ENCODE measurements at regions of chr10 and their contacts with region 1.

Region 1: GRCh38 chr10:110076559-110077318 is 69.0 kb downstream of the ADD3 start:
- DNase-seq: peak in 1 of 2 donors; percentile 44
- ATAC-seq: peak; percentile 69 to 91 (median 83)
- H3K4me3 ChIP-seq: peak overlapping the region in 7 of 10 donors; percentile 16 to 37 (median 29)
- H3K27ac ChIP-seq: peak overlapping the region; percentile 24 to 92 (median 82)
- H3K4me1 ChIP-seq: peaks cover 2 to 96% (median 86%) of the 10 kb centered on the region in 9 donors
- H3K27me3 ChIP-seq: no peaks in the 10 kb centered on the region
- CTCF ChIP-seq: no peak

Region 2: DNA sequence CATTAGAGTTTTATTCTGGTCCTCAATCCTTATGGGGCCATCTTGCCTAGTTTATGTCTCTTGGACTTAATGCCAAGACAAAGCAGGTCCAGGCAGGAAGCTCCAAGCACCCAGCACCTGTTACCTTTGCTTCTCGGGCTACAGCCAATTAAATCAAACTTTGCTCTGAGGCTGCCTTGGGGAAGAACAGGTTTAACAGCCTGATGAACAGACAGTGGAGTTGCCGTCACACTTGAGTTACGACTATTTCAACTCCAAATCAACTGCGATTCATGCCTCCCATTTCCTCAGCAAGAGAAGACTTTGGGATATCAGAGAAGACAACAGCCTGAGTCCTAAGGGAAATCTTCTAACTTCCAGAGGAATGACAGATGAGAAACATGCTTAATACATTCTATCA is 215.7 kb before region 1 on chr10:
- intact Hi-C with region 1: no loop called
- DNase-seq: no peak
- ATAC-seq: no peak
- H3K4me3 ChIP-seq: no peak overlapping the region
- H3K27ac ChIP-seq: no peak overlapping the region
- H3K4me1 ChIP-seq: no peaks in the 10 kb centered on the region
- H3K27me3 ChIP-seq: no peaks in the 10 kb centered on the region
- CTCF ChIP-seq: no peak

Region 3: DNA sequence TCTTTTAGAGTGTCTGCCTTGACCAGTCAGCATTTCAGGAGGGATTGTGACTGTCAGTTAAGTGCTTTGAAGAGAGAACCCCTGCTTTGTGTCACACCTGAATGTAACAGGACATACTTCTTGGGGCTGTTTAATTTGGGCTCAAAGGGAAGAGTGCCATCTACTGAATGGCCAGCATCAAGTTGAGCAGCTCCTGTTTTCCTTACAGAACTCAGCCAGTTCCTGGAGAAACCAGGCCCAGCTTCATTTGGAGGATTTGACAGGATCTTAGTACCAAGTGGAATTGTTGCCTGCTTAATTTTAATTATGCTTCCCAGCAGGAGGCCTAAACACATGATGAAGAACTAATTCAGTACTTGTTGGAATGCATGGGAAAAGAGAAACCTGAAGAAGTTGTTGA is 60.7 kb before region 1 on chr10:
- intact Hi-C with region 1: loop called in 2 of 10 experiments (anchors 5 to 10 kb)
- DNase-seq: no peak
- ATAC-seq: peak in 7 of 8 donors; percentile 46 to 63 (median 58)
- H3K4me3 ChIP-seq: no peak overlapping the region
- H3K27ac ChIP-seq: peak overlapping the region in 6 of 10 donors; percentile 8 to 66 (median 47)
- H3K4me1 ChIP-seq: peaks cover 2 to 89% (median 77%) of the 10 kb centered on the region in 9 donors
- H3K27me3 ChIP-seq: no peaks in the 10 kb centered on the region
- CTCF ChIP-seq: peak in 6 of 9 donors; percentile 23 to 56 (median 37)

Region 4: DNA sequence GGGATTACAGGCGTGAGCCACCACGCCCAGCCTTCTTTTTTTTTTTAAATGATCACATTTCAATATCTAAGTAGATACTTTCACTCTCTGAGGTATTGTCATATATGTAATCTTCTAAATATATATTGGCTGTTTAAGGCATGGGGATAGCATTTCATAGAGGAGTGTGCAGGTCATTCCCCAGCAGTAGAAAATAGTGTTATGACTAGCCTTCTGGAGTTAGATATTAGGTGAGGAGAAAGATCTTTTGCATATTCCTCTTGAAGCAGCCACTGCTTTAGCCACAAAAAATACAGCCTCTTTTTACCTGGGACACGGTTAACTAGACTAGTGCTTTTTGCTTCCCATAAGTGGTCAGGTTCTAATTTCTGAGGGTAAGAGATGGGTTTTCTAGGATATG is 40.1 kb before region 1 on chr10:
- intact Hi-C with region 1: no loop called
- DNase-seq: no peak
- ATAC-seq: no peak
- H3K4me3 ChIP-seq: no peak overlapping the region
- H3K27ac ChIP-seq: peak overlapping the region in 1 of 10 donors; percentile 0
- H3K4me1 ChIP-seq: peaks cover 12 to 87% (median 60%) of the 10 kb centered on the region in 9 donors
- H3K27me3 ChIP-seq: no peaks in the 10 kb centered on the region
- CTCF ChIP-seq: no peak